K562 (cell line): ENCODE measurements at regions of chr15 and their contacts with region 1.

Region 1: DNA sequence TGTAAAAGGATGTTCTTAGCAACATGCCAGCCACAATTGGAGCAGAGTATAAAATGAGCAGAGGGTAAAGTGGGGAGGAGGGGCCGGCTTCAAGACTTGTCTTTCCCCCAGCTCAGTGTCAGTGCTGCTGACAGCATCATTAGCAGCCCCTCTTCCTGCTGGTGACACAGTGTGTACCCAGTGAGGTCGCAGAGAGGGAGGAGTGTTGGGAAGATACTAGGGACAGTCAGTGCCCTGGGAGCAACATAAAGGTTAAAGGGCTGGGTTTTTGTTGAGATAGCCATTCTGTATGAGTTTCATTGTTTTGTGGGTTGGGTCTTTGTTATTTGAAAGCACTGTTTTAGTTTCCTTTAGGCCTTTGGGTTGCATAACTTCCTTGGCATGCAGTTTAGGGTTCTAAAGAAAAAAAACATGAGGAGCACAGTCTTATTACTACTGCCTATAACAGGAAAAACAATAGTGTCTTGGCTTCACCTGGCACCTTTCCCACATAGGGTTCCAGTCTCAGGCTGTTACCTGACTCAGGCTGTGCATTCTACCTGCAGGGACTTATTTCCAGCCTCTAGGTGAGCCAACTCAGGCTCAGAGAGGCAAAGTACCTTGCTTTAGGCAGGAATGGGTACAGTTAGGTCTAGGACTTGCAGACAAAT is 94.1 kb upstream of the SKOR1 start:
- DNase-seq: no peak
- ATAC-seq: no peak
- H3K4me3 ChIP-seq: no peak overlapping the region
- H3K27ac ChIP-seq: no peak overlapping the region
- H3K4me1 ChIP-seq: no peaks in the 10 kb centered on the region
- H3K27me3 ChIP-seq: no peaks in the 10 kb centered on the region
- CTCF ChIP-seq: no peak
- EP300 ChIP-seq: no peak
- POLR2A ChIP-seq: no peak
- RAD21 ChIP-seq: no peak

Region 2: GRCh38 chr15:67456677-67457529 is 274.3 kb before region 1 on chr15:
- CTCF ChIA-PET with region 1: no interaction called
- POLR2A ChIA-PET with region 1: no interaction called
- in situ Hi-C with region 1: no loop called
- intact Hi-C with region 1: loop called (anchors 10 kb)
- DNase-seq: peak; percentile 77 to 82 (median 82)
- ATAC-seq: peak; percentile 99
- H3K4me3 ChIP-seq: no peak overlapping the region
- H3K27ac ChIP-seq: no peak overlapping the region
- H3K4me1 ChIP-seq: no peaks in the 10 kb centered on the region
- H3K27me3 ChIP-seq: 0 out of 5 replicates have a peak, but pooled peaks cover 0 to 4% of the 10 kb centered on the region in 2 experiments
- CTCF ChIP-seq: peak; percentile 92 to 94 (median 92)
- EP300 ChIP-seq: no peak
- POLR2A ChIP-seq: no peak
- RAD21 ChIP-seq: peak; percentile 79 to 90